GM13976 (cell line): ENCODE measurements at regions of chr1 and their contacts with region 1.

Region 1: DNA sequence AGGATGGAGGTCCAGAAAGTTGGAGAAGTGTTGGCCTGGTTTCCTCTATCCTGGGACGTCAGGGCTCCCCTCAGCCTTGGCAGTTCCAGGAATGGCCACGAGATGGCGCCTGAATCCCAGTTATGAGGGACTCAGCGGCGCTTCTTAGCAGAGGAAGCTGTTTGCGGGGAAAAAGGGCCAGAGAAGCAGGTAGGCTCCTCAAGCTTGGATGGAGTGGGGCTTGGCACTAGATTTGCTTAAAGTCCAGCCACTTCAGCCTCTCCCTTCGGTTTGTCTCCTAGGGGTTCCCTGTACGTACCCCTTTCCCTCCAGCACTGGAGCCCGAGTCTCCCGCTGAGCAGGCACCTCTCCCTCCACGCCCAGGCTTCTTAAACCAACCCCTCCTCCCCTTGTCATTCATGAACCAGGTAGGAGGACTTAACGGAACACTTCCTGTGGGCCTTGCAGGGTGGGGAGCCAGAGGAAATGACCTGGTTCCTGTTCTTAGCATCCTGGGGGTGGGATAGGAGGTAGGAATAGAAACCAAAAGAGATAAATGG is 32.0 kb upstream of the TENT5B start:
- DNase-seq: peak; percentile 86
- CTCF ChIP-seq: peak; percentile 96

Region 2: GRCh38 chr1:26574719-26575251 is 469.9 kb before region 1 on chr1:
- in situ Hi-C with region 1: no loop called
- DNase-seq: no peak
- CTCF ChIP-seq: no peak

Region 3: GRCh38 chr1:27097484-27097917 is 52.8 kb after region 1 on chr1:
- in situ Hi-C with region 1: loop called (anchors 5 kb)
- DNase-seq: peak; percentile 83
- CTCF ChIP-seq: peak; percentile 89